ENCODE measurements at regions of chrX and their contacts with region 1.

Region 1: DNA sequence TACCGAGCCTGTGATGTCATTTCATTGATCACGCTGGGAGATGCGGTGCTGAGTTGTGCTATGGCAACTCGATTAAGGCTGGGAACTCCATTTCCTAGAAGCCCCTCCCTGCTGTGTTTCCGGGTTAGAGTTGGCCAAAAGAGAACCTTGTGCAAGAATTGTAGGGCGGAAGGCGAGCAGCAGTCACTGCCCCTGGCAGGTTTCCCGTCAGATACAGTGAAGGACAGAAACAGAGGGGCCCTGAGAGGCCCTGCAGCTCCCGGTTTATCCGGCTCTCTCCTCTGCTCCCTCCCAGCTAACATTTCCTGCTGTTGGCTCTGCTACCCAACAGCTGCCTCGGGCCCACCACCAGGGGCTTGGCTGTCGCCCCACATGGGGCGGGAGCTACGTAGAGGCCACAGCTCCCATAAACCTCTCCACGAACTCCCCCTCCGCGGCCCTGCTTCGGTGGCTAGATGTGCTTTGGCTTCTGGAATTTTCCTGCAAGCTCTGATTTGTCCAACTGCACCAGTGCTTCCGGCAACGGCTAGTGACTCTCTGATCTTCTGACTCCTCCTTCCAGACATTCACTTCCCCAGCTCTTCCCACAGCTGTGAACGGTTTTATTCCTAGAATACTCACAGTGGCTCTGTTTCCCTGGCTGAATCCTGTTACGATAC is 74.9 kb upstream of the USP9X start:
- DNase-seq: peak; percentile 89
- H3K4me3 ChIP-seq: peak overlapping the region in 3 of 4 donors; percentile 26 to 35 (median 31)
- H3K27ac ChIP-seq: peak overlapping the region; percentile 71 to 80 (median 78)
- H3K4me1 ChIP-seq: no peaks in the 10 kb centered on the region
- H3K27me3 ChIP-seq: no peaks in the 10 kb centered on the region
- CTCF ChIP-seq: no peak
- EP300 ChIP-seq: no peak
- POLR2A ChIP-seq: peak in 1 of 2 donors; percentile 15

Region 2: DNA sequence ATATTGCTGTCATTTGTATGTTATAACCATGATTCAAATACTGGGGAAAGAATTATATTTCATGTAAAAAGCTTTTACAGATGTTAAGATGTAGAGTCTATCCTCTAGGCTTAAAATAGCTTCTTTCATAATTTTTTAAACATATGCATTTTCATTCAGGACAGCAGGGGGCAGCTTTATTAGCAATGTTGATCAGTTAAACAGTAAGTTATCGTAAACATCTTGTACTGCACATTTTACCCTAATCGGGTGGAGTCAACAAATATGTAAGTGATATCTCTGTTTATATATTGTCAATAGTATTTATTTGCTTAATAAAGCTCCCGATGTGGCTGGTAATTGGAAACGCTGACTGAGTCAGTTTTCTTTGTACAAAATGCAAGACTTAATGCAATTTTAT is 132.4 kb before region 1 on chrX:
- intact Hi-C with region 1: loop called (anchors 10 kb)
- DNase-seq: no peak
- H3K4me3 ChIP-seq: no peak overlapping the region
- H3K27ac ChIP-seq: no peak overlapping the region
- H3K4me1 ChIP-seq: no peaks in the 10 kb centered on the region
- H3K27me3 ChIP-seq: no peaks in the 10 kb centered on the region
- CTCF ChIP-seq: peak in 2 of 4 experiments; percentile 10 to 33
- EP300 ChIP-seq: no peak
- POLR2A ChIP-seq: no peak

Region 3: GRCh38 chrX:40908857-40909475 is 101.4 kb before region 1 on chrX:
- intact Hi-C with region 1: no loop called
- DNase-seq: no peak
- H3K4me3 ChIP-seq: no peak overlapping the region
- H3K27ac ChIP-seq: no peak overlapping the region
- H3K4me1 ChIP-seq: no peaks in the 10 kb centered on the region
- H3K27me3 ChIP-seq: no peaks in the 10 kb centered on the region
- CTCF ChIP-seq: no peak
- EP300 ChIP-seq: no peak
- POLR2A ChIP-seq: no peak

Region 4: DNA sequence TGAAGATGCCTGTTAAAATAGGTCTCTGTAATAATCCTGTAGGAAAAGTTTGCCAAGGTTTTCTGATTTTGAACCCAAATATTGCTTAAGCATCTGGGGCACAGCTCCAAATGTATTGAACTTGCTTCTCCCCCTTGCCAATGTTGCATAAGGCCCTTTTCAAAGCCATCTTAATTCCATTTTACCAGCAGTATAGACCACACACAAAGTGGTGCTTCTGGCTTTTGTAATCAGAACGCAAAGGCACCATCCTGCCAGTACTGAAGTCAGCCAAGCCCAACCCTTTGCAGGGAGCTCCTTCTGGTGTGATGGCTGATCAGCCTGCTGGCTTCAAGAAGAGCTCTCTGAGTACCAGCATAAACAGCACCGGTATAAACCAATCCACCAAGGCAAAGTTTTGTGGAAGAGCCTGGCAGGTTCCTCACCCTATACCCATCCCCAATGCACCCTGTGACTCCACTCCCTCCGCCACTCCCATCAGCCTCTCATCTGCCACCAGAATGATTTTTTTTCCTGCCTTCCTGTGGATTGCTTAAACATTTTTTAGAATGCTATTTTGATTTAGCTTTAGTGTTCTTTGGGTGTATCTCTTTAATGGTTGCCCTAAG is 35.7 kb after region 1 on chrX:
- intact Hi-C with region 1: loop called (anchors 2 kb)
- DNase-seq: peak; percentile 73
- H3K4me3 ChIP-seq: no peak overlapping the region
- H3K27ac ChIP-seq: peak overlapping the region in 3 of 4 donors; percentile 23 to 31 (median 25)
- H3K4me1 ChIP-seq: peaks cover 0 to 4% (median 0%) of the 10 kb centered on the region in 4 donors
- H3K27me3 ChIP-seq: no peaks in the 10 kb centered on the region
- CTCF ChIP-seq: no peak
- EP300 ChIP-seq: no peak
- POLR2A ChIP-seq: no peak